A673 (cell line): ENCODE measurements at regions of chr21 and their contacts with region 1.

Region 1: DNA sequence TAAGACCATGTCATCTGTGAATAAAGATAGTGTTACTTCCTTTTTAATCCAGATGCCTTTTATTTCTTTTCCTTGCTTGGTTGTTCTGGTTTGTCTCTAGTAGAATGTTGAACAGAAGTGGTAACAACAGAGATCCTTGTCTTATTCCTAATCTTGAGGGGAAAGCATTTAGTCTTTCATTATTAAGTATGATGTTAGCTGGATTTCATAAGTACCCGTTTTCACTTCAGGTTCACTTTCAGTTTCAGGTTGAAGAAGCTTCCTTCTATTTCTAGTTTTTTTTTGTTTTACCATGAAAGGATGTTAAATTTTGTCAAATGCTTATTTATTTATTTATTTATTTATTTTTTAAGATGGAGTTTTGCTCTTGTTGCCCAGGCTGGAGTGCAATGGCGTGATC is 22.3 kb upstream of the AGPAT3 start:
- DNase-seq: no peak
- H3K4me3 ChIP-seq: no peak overlapping the region
- H3K27ac ChIP-seq: no peak overlapping the region
- H3K4me1 ChIP-seq: no peaks in the 10 kb centered on the region
- H3K27me3 ChIP-seq: no peaks in the 10 kb centered on the region
- CTCF ChIP-seq: no peak

Region 2: GRCh38 chr21:43789276-43790009 is 53.3 kb before region 1 on chr21 and contains the start of gene RRP1:
- CTCF ChIA-PET with region 1: no interaction called
- POLR2A ChIA-PET with region 1: no interaction called
- intact Hi-C with region 1: no loop called
- DNase-seq: peak; percentile 94
- H3K4me3 ChIP-seq: peak within 1 kb of the TSS; percentile 78
- H3K27ac ChIP-seq: peak within 1 kb of the TSS; percentile 87
- H3K4me1 ChIP-seq: peaks cover 12% of the 10 kb centered on the region
- H3K27me3 ChIP-seq: no peaks in the 10 kb centered on the region
- CTCF ChIP-seq: peak; percentile 66
- total RNA-seq, gene RRP1: 72.5 and 86.4 TPM in 2 replicates

Region 3: GRCh38 chr21:43825681-43826622 is 16.8 kb before region 1 on chr21:
- CTCF ChIA-PET with region 1: no interaction called
- POLR2A ChIA-PET with region 1: interaction called, 14 read pairs
- intact Hi-C with region 1: no loop called
- DNase-seq: no peak
- H3K4me3 ChIP-seq: no peak overlapping the region
- H3K27ac ChIP-seq: no peak overlapping the region
- H3K4me1 ChIP-seq: no peaks in the 10 kb centered on the region
- H3K27me3 ChIP-seq: no peaks in the 10 kb centered on the region
- CTCF ChIP-seq: 0 out of 2 replicates have a peak, but pooled peaks have one; percentile 19